ENCODE measurements at regions of chr11 and their contacts with region 1.

Region 1: DNA sequence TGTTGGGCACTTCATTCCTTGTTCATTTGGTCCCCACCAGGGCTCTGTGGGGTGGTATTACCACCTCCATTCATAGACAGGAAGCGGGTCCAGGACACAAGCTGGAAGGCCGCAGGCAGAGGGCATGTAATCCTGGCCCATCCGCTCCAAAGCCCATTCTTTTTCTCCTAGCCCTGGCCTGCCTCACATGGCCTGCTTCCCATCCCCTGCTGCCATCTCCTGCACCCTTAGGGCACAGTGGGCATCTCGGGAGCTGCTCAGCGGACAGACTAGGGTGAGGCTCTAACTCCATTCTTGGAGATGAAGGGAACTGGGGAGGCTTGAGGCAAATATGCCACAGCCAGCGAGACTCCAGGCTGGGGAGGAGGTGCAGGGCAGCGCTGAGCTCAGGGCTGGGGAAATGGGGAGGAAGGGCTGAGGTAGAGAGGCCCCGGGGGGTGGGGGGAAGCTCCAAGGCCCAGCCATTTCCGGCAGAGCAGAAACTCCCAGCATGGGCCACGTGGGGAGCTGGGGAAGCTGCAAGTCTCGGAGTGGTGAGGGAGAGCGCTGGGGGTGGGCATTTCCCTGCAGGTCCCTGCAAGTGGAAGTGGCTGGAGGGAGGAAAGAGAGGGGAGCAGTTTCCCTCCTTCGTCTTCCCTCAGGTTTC is 14.3 kb upstream of the BCL9L start:
- DNase-seq: peak; percentile 75
- CTCF ChIP-seq: no peak

Region 2: GRCh38 chr11:118838905-118839553 is 101.0 kb before region 1 on chr11:
- in situ Hi-C with region 1: no loop called
- DNase-seq: peak; percentile 73
- CTCF ChIP-seq: no peak

Region 3: DNA sequence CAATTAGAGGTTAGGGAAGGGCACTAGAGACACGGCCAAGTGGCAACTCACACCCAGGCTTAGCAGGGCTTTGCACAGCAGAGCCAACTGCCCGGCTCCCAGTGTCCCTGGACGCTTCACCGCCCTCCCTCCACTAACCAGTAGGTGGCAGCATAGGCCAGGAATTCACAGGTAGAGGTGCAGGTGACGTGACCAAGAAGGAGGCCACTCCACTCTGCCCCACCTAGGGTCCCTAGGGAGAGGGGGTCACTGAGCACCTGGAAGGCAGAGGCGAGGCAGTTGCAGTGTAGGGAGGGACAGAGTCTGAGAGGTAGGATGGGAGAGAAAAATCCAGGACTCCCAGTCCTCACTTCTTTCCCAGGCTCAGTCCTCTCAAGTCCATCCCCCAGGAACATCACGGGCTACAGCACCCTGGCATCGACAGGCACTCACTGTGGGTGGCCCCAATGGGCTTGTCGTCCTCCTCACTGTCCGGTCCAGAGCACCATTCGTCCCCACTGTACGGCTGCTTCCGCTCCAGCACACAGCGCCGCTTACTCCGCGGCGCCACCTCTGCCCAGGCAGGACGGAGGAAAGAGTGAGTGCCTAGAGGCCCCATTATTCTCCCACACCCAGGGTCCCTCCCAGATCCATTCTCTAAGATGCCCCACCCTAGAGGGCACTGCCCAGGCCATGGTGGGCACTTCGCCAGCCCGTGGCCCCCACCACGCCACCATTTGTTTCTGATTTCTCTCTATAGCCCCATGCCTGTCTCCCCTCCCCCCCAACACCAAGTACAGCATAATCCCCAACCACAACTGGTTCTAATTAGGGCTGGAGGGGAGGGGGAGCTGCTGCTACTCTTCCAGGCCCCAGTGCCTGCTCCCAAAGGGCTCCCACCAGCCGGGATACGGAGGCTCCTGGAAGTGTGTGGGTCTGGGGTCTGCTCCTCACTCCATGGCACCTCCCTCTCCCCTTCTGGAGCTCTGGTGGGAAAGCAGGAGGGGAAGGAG is 32.7 kb before region 1 on chr11:
- in situ Hi-C with region 1: loop called (anchors 5 kb)
- DNase-seq: peak; percentile 89
- CTCF ChIP-seq: peak; percentile 92

Measured in GM13976 (cell line).